ENCODE measurements at regions of chr16 and their contacts with region 1.

Region 1: GRCh38 chr16:57413301-57413730 is 8.7 kb downstream of the CCL17 start:
- DNase-seq: peak; percentile 90
- ATAC-seq: peak; percentile 85
- H3K4me3 ChIP-seq: no peak overlapping the region
- H3K4me3 Mint-ChIP-seq: peak overlapping the region; percentile 30
- H3K27ac ChIP-seq: peak overlapping the region; percentile 74 to 80
- H3K27ac Mint-ChIP-seq: peak overlapping the region; percentile 71
- H3K4me1 ChIP-seq: peaks cover 47 to 58% of the 10 kb centered on the region in 2 donors
- H3K4me1 Mint-ChIP-seq: peaks cover 61% of the 10 kb centered on the region
- H3K27me3 ChIP-seq: no peaks in the 10 kb centered on the region
- H3K27me3 Mint-ChIP-seq: no peaks in the 10 kb centered on the region
- CTCF ChIP-seq: no peak

Region 2: DNA sequence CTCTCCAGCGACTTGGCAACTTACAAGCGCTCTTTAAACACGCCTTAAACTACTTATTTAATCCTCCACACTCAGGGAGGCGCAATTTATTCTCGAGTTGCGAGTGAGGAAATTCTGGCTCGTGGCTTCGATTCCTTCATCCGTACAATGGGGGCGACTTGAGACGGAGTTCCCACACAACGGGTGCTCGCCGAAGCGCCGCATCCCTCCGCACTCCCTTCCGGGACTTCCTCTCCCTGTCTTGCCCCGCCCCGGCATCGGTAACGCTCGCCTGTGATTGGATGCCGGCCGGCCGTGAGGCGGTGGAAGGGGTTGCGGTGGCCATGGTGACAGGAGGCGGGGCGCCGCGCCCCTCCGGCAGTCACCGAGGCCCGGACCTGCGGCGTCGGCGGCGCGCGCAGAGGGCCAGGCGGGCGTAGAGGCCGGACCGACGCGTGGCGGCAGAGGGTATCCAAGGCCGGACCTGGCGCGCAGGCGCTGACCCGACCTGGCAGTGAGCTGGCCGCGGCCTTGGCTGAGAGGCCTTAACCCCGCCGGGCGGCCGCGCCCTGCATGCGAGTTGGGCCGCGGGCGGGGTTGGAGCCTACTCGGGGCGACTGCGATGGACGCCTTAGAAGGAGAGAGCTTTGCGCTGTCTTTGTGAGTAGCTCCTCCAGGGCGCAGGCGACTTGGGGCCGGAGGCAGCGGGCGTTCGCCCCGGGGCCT is 168.4 kb before region 1 on chr16 and contains the start of gene ARL2BP:
- CTCF ChIA-PET with region 1: interaction called, 4 read pairs
- POLR2A ChIA-PET with region 1: interaction called, 3 read pairs
- intact Hi-C with region 1: loop called (anchors 5 kb)
- DNase-seq: peak; percentile 96
- ATAC-seq: peak; percentile 95
- H3K4me3 ChIP-seq: peak within 1 kb of the TSS; percentile 74 to 85 (median 79)
- H3K4me3 Mint-ChIP-seq: peak within 1 kb of the TSS; percentile 99
- H3K27ac ChIP-seq: peak within 1 kb of the TSS; percentile 79 to 92
- H3K27ac Mint-ChIP-seq: peak within 1 kb of the TSS; percentile 96
- H3K4me1 ChIP-seq: peaks cover 26 to 33% of the 10 kb centered on the region in 2 donors
- H3K4me1 Mint-ChIP-seq: peaks cover 34% of the 10 kb centered on the region
- H3K27me3 ChIP-seq: no peaks in the 10 kb centered on the region
- H3K27me3 Mint-ChIP-seq: no peaks in the 10 kb centered on the region
- CTCF ChIP-seq: no peak
- total RNA-seq, gene ARL2BP: 36.8 and 38.8 TPM in 2 replicates

Region 3: DNA sequence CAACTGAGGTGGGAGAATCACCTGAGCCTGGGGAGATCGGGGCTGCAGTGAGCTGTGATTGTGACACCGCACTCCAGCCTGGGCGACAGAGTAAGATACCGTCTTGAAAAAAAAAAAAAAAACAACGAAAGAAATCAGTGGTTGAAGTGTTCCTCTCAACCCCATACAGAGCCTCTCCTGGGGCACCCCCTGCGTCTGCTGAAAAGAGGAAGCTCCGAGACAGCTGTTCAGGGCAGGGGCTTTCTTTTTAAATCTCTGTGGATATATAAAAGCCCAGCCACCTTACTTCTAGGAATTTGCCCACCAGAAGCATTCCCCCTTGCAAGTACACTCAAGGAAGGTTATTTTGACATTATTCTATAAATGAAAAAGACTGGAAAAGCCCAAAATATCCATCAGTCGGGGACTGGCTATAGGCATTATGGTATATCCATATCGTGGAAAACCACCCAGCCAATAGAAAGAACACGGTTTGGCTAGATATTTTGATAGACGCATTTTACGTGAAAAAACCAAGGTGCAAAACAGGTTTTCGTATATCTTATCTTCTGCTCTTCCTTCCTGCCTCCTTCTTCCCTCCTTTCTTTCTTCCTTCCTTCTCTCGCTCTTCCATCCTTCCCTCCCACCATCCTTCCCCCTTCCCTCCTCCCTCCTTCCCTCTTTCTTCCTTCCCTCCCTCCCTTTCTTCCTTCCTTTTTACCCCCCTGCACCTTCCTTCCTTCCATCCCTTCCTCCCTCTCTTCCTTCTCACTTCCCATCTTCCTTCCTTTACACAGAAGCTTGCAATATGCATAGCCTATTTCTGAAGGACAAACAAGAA is 63.9 kb before region 1 on chr16:
- CTCF ChIA-PET with region 1: interaction called, 10 read pairs
- POLR2A ChIA-PET with region 1: interaction called, 6 read pairs
- intact Hi-C with region 1: loop called (anchors 2 kb)
- DNase-seq: peak; percentile 90
- ATAC-seq: peak; percentile 98
- H3K4me3 ChIP-seq: peak overlapping the region in 2 of 5 experiments; percentile 2 to 39
- H3K4me3 Mint-ChIP-seq: peak overlapping the region; percentile 50
- H3K27ac ChIP-seq: no peak overlapping the region
- H3K27ac Mint-ChIP-seq: peak overlapping the region; percentile 47
- H3K4me1 ChIP-seq: peaks cover 16 to 17% of the 10 kb centered on the region in 2 donors
- H3K4me1 Mint-ChIP-seq: peaks cover 32% of the 10 kb centered on the region
- H3K27me3 ChIP-seq: peaks cover 0 to 13% (median 6%) of the 10 kb centered on the region in 4 experiments
- H3K27me3 Mint-ChIP-seq: peaks cover 14% of the 10 kb centered on the region
- CTCF ChIP-seq: no peak

Region 4: DNA sequence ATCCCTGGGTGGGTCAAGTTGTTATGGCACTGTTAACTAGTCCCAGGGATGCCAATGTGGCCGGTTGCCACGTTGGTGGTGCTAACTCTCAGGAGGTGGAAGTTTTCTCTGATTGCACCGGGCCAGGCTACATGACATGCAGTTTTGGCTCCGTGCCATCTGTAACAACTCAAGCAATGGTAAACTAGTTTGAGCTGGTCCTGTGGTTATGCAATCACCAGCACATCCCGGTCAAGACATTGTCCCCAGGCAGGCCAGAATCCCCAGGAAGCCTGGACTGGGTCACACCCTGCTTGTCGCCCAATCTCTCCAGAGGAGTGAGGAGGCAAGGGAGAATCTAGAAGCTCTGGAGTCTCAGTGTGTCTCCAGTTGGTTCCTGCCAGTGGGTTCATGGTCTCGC is 18.9 kb before region 1 on chr16:
- CTCF ChIA-PET with region 1: interaction called, 31 read pairs
- POLR2A ChIA-PET with region 1: no interaction called
- intact Hi-C with region 1: no loop called
- DNase-seq: no peak
- ATAC-seq: no peak
- H3K4me3 ChIP-seq: no peak overlapping the region
- H3K4me3 Mint-ChIP-seq: no peak overlapping the region
- H3K27ac ChIP-seq: no peak overlapping the region
- H3K27ac Mint-ChIP-seq: no peak overlapping the region
- H3K4me1 ChIP-seq: peaks cover under 1 to 2% of the 10 kb centered on the region in 2 donors
- H3K4me1 Mint-ChIP-seq: peaks cover 3% of the 10 kb centered on the region
- H3K27me3 ChIP-seq: no peaks in the 10 kb centered on the region
- H3K27me3 Mint-ChIP-seq: no peaks in the 10 kb centered on the region
- CTCF ChIP-seq: no peak

Region 5: DNA sequence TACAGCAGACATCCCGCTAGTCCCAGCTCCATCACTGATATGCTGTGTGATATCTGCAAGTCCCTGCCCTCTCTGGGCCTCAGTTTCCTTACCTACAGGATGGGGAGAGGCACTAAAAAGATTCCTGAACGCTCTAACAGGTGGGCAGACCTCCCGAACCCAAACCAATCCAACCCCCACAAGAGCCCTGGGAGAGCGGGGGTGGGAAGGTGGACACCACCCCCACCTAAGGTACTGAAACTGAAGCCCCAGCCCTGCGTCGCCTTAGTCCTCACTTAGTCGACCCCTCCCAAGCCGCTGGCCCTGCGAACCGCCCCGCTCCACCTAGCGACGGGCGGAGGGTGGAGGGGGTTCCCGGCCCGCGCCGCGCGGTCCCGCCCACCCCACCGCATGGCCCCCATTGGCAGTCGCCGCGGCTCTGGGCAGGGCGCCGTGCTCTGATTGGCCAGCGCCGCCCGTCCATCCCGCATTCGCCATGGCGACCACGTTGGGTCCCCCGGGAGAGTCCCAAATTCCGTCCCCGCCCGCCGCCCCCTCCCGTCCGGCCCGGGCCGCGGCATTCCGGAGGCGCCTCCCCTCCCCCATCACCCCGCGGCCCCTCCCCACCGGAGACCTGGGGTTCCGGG is 122.5 kb after region 1 on chr16:
- CTCF ChIA-PET with region 1: interaction called, 9 read pairs
- POLR2A ChIA-PET with region 1: no interaction called
- intact Hi-C with region 1: loop called (anchors 5 kb)
- DNase-seq: peak; percentile 95
- ATAC-seq: peak; percentile 76
- H3K4me3 ChIP-seq: peak overlapping the region in 4 of 5 experiments; percentile 56 to 73 (median 70)
- H3K4me3 Mint-ChIP-seq: peak overlapping the region; percentile 89
- H3K27ac ChIP-seq: peak overlapping the region; percentile 90 to 94
- H3K27ac Mint-ChIP-seq: peak overlapping the region; percentile 96
- H3K4me1 ChIP-seq: peaks cover 86 to 91% of the 10 kb centered on the region in 2 donors
- H3K4me1 Mint-ChIP-seq: peaks cover 79% of the 10 kb centered on the region
- H3K27me3 ChIP-seq: no peaks in the 10 kb centered on the region
- H3K27me3 Mint-ChIP-seq: no peaks in the 10 kb centered on the region
- CTCF ChIP-seq: peak; percentile 29

Measured in B cell (primary cell).